HepG2 (cell line): ENCODE measurements at regions of chr1 and their contacts with region 1.

Region 1: DNA sequence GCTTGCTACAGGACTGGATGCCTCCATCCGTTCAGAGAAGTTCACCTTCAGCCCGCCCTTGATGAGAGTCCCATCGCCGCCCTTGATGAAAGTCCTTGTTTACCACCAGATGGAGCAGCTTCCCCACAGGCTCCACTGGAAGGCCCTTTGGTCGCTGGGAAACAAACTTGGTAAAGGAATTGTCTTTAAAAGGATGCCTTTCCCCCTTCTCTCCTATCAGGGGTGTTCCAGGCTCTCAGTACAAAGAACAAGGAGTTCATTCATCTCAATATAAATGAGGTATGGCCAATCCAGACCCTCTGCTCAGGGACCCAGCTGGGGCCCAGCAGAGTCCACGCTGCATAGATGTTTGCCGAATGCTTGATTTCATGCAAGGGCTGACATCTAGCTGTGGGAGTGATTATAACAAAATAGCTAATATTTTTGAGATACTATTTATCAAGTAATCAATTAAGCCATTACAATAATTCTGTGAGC is 50.8 kb downstream of the CAPN9 start:
- DNase-seq: peak; percentile 62
- ATAC-seq: peak; percentile 92
- H3K4me3 ChIP-seq: no peak overlapping the region; a peak in 1 of 6 replicates
- H3K27ac ChIP-seq: no peak overlapping the region
- H3K4me1 ChIP-seq: peaks cover 22% of the 10 kb centered on the region
- H3K27me3 ChIP-seq: peaks cover 0 to 10% of the 10 kb centered on the region in 2 experiments; a peak in 1 of 5 replicates
- CTCF ChIP-seq: peak; percentile 88
- EP300 ChIP-seq: no peak
- POLR2A ChIP-seq: no peak
- RAD21 ChIP-seq: peak; percentile 75

Region 2: DNA sequence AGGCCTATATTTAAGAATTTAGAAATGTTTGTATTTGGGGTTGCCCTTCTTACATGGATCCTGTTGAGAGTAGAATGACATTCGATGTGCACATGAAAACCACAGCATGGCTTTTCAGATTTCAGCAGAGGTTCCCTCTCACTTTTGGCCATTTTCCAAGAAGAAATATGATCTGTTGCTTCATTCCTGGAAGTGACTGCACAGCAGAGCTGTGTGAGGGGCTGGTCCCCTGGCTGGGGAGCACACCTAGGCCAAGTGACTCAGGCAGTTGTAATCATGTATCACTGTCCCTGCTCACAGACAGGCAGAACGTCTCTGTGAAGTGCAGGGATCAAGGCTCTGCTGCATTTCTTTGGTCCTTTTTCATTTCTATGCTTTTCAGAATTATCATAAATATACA is 116.4 kb before region 1 on chr1:
- CTCF ChIA-PET with region 1: no interaction called
- POLR2A ChIA-PET with region 1: no interaction called
- in situ Hi-C with region 1: no loop called
- intact Hi-C with region 1: no loop called
- DNase-seq: peak; percentile 77
- ATAC-seq: peak; percentile 94
- H3K4me3 ChIP-seq: no peak overlapping the region
- H3K27ac ChIP-seq: peak overlapping the region; percentile 67
- H3K4me1 ChIP-seq: peaks cover 40% of the 10 kb centered on the region
- H3K27me3 ChIP-seq: no peaks in the 10 kb centered on the region
- CTCF ChIP-seq: no peak
- EP300 ChIP-seq: peak in 1 of 2 experiments; percentile 61; a peak in 1 of 4 replicates
- POLR2A ChIP-seq: no peak
- RAD21 ChIP-seq: no peak

Region 3: GRCh38 chr1:230917284-230918135 is 119.5 kb after region 1 on chr1:
- CTCF ChIA-PET with region 1: interaction called, 12 read pairs
- POLR2A ChIA-PET with region 1: no interaction called
- in situ Hi-C with region 1: no loop called
- intact Hi-C with region 1: loop called (anchors 1 kb)
- DNase-seq: peak; percentile 80
- ATAC-seq: peak; percentile 90
- H3K4me3 ChIP-seq: no peak overlapping the region
- H3K27ac ChIP-seq: no peak overlapping the region
- H3K4me1 ChIP-seq: peaks cover 13% of the 10 kb centered on the region
- H3K27me3 ChIP-seq: no peaks in the 10 kb centered on the region
- CTCF ChIP-seq: peak; percentile 81
- EP300 ChIP-seq: no peak
- POLR2A ChIP-seq: no peak
- RAD21 ChIP-seq: peak; percentile 50; the same call in 1 of the 2 replicates

Region 4: GRCh38 chr1:231091831-231092301 is 293.9 kb after region 1 on chr1:
- CTCF ChIA-PET with region 1: interaction called, 10 read pairs
- POLR2A ChIA-PET with region 1: no interaction called
- in situ Hi-C with region 1: no loop called
- intact Hi-C with region 1: loop called (anchors 5 kb)
- DNase-seq: peak; percentile 40
- ATAC-seq: peak; percentile 90
- H3K4me3 ChIP-seq: no peak overlapping the region
- H3K27ac ChIP-seq: no peak overlapping the region
- H3K4me1 ChIP-seq: no peaks in the 10 kb centered on the region
- H3K27me3 ChIP-seq: no peaks in the 10 kb centered on the region; a peak in 1 of 5 replicates
- CTCF ChIP-seq: peak; percentile 86
- EP300 ChIP-seq: no peak
- POLR2A ChIP-seq: no peak
- RAD21 ChIP-seq: 0 out of 2 replicates have a peak, but pooled peaks have one; percentile 56